Cardiac septum (tissue), 1 donor: ENCODE measurements at regions of chr19 and their contacts with region 1.

Region 1: DNA sequence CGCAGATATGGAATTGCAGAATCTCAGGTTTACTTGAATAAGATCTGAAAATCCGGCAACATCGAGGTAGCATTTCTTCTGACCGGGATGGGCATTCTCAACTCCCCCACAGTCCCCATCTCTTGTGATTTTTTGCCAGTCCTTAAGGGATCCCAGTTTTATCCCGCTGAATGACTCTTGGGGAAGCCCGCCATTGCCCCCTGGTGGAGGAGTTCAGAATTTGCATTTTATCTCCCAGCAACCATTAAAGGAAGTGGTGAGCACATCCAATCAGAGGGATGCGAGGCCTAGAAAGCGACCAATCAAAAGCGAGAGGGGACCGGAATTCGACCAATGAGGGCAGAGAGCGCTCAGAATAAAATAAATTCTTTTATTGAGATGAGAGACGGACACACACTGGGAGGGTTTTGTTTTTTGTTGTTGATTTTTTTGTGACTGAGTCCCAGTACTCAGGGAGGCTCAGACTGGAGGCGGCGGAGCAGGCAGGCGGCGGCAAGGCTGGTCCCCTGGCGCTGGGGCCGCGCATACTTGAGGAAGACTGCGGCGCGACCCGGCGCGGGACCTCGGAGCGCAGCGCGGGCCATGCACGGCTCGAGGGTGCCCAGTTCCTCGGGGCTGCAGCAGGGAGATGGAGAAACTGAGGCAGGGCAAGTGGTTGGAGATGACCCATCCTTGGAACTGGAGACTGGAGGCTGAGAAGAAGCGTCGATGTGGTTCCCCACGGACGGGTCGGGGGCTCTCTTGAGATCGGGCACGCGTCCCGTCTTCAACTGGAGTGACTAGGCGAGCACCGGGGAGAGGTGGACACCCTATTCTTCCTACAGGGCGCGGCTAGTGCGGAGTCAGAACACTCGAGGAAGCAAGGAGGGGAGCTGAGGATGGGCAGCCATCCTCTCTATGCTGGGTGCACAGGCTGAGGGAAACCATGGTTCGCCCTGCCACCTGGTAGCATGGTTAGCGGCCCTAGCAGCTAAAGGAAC is 4.0 kb upstream of the TTC9B start:
- DNase-seq: peak; percentile 83

Region 2: GRCh38 chr19:39995794-39996193 is 226.4 kb before region 1 on chr19:
- intact Hi-C with region 1: no loop called
- DNase-seq: no peak

Region 3: GRCh38 chr19:40139533-40140287 is 82.4 kb before region 1 on chr19:
- intact Hi-C with region 1: loop called (anchors 2 kb)
- DNase-seq: no peak

Region 4: DNA sequence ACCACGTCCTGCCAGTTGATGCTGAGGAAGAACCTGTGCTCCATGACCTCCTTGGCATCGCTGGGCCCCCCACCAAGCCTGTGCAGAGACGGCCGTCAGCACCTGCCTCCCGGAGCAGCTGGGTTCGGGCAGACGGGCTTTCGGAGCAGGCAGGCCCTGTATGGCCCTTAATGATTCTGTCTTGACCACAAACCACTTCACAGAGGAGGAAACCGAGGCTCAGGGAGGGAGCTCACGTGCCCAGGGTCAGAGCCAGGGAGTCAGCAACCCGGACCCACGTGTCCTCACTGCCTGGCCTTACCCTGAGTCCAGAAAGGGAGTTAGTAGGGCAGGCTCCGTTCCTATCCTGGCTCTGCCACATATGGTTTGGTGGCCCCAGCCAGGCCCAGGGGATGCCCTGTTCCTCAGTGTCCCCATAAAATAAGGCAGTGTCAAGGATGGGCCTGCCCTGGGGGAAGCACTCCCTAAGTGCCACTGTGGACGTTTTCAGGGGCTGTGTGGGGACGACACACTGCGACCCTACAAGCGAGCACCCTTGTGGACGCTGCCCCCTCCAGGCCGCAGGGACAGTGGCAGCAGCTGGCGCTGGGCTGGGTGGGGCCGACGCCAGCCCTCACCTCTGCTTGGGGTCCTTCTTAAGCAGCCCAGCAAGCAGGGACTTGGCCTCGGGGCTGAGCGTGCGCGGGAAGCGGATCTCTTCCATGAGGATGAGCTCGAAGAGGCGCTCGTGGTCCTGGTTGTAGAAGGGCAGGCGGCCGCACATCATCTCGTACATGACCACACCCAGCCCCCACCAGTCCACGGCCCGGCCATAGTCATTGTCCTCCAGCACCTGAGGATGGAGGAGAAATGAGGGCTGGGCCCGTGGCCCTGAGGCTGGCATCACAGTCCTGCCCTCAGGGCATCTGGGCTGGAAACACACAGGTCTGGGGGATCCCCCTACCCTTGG is 13.4 kb after region 1 on chr19:
- intact Hi-C with region 1: no loop called
- DNase-seq: no peak

Region 5: GRCh38 chr19:40284501-40285352 is 62.6 kb after region 1 on chr19 and contains the start of gene AKT2:
- intact Hi-C with region 1: loop called (anchors 5 kb)
- DNase-seq: peak; percentile 82
- total RNA-seq, gene AKT2: 116 TPM